ENCODE measurements at regions of chr3 and their contacts with region 1.

Region 1: DNA sequence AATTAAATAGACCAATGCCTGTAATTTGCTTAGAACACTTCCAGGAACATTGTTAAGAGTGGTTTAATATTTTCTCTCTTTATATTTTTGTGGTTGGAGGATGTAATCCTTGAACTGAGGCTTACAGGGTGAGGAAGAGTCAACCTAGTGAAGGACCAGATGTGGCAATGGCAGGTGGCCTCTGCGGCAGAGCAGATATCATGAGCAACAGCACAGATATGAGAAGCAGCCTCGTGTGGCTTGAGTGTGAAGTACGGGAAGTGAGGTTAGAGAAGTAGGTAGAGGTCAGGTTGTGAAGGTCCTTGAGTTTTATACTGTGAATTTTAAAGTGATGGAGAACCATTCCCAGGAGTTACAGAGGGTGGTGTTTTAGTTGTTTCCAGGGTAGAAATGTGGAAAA is 417.6 kb upstream of the SUCLG2 start:
- DNase-seq: no peak
- ATAC-seq: no peak
- H3K4me3 ChIP-seq: no peak overlapping the region
- H3K4me3 Mint-ChIP-seq: no peak overlapping the region
- H3K27ac ChIP-seq: no peak overlapping the region
- H3K27ac Mint-ChIP-seq: peak overlapping the region in 2 of 9 donors; percentile 1 to 46
- H3K4me1 ChIP-seq: no peaks in the 10 kb centered on the region
- H3K4me1 Mint-ChIP-seq: peaks cover 0 to 44% (median 23%) of the 10 kb centered on the region in 7 donors
- H3K27me3 ChIP-seq: no peaks in the 10 kb centered on the region
- H3K27me3 Mint-ChIP-seq: no peaks in the 10 kb centered on the region

Region 2: DNA sequence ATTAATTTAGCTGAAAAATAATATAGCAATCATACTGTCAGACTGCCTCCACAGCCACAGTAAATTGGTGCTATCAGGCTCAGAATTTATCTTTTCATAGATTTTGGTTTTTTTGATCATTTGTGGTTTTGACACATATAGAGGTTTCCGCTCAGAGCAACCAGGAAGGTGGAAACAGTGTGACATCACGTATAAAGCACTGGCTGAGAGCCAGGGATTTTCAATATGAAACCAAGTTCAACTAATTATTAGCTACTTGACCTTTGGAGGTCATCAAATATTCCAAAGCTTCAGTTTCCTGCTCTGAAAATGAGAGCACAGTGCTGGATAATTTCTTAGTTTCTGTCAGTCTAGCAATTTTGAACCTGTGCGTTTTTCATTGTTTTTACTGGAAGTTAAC is 16.2 kb after region 1 on chr3:
- CTCF ChIA-PET with region 1: interaction called, 3 read pairs
- POLR2A ChIA-PET with region 1: interaction called, 3 read pairs
- intact Hi-C with region 1: loop called in 1 of 2 experiments (anchors 2 kb)
- DNase-seq: peak in 7 of 9 donors; percentile 61 to 81 (median 74)
- ATAC-seq: peak; percentile 86
- H3K4me3 ChIP-seq: peak overlapping the region; percentile 23
- H3K4me3 Mint-ChIP-seq: peak overlapping the region; percentile 8 to 75 (median 39)
- H3K27ac ChIP-seq: no peak overlapping the region
- H3K27ac Mint-ChIP-seq: peak overlapping the region in 8 of 9 donors; percentile 1 to 85 (median 48)
- H3K4me1 ChIP-seq: peaks cover 27 to 37% of the 10 kb centered on the region in 2 donors
- H3K4me1 Mint-ChIP-seq: peaks cover 25 to 85% (median 71%) of the 10 kb centered on the region in 7 donors
- H3K27me3 ChIP-seq: no peaks in the 10 kb centered on the region
- H3K27me3 Mint-ChIP-seq: peaks cover 0 to 4% (median 0%) of the 10 kb centered on the region in 5 donors